Ascending aorta (tissue), 2 donors: ENCODE measurements at regions of chr16 and their contacts with region 1.

Region 1: GRCh38 chr16:88437373-88437964 is 15.6 kb upstream of the ZFPM1 start:
- DNase-seq: no peak
- H3K4me3 ChIP-seq: no peak overlapping the region
- H3K27ac ChIP-seq: no peak overlapping the region
- H3K4me1 ChIP-seq: no peaks in the 10 kb centered on the region
- H3K27me3 ChIP-seq: no peaks in the 10 kb centered on the region
- CTCF ChIP-seq: peak; percentile 83 to 98 (median 94)

Region 2: GRCh38 chr16:87982491-87983415 is 454.7 kb before region 1 on chr16:
- intact Hi-C with region 1: loop called (anchors 10 kb)
- DNase-seq: peak in 1 of 2 donors; percentile 55
- H3K4me3 ChIP-seq: no peak overlapping the region
- H3K27ac ChIP-seq: no peak overlapping the region
- H3K4me1 ChIP-seq: no peaks in the 10 kb centered on the region
- H3K27me3 ChIP-seq: no peaks in the 10 kb centered on the region
- CTCF ChIP-seq: no peak

Region 3: DNA sequence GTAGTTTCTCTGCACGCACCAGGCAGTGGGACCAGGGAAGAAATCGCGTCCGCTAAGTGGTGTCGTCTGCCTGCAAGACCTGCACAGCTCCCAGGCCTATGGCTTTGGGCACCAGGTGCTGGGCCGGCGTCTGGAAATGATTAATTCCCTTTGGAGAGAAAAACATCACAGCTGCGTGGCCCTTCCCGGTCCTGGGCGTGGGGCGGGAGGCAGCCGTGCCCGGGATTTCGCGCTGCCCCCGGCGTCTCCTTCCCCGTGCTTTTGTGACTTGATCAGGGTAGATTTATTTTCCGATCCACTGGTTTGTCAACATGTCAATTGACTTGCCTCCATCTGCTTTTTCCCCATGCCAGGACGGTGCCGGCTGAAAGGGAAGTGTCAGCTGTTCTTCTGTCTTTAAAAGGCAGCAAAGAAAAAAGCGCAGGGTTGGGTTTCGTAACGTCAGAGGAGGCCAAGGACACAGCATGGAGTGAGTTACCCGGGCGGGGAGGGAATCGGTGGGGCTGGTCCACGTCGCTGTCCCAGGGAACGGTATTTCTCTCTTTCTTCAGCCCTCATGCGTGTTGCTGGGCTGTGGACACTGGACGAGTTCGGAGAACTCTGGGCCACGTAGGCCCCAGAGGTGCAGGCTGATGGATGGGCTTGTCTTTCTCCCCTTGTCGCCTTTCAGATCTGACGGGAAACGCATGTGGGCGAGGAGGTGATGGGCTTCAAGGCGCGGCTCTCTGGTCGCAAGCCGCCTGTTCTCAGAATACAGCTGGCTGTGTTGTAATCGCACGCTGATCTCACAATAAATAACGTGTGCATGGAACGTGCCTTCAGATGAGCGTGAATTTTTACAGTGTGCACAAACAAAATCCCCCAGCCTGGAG is 242.8 kb before region 1 on chr16:
- intact Hi-C with region 1: loop called (anchors 1 kb)
- DNase-seq: no peak
- H3K4me3 ChIP-seq: no peak overlapping the region
- H3K27ac ChIP-seq: no peak overlapping the region
- H3K4me1 ChIP-seq: no peaks in the 10 kb centered on the region
- H3K27me3 ChIP-seq: no peaks in the 10 kb centered on the region
- CTCF ChIP-seq: no peak